ENCODE measurements at regions of chr12 and their contacts with region 1.

Region 1: GRCh38 chr12:15899282-15899870 is 11.8 kb upstream of the DERA start:
- DNase-seq: no peak
- H3K4me3 ChIP-seq: no peak overlapping the region
- H3K27ac ChIP-seq: peak overlapping the region in 1 of 2 experiments; percentile 5; a peak in 1 of 4 replicates
- H3K4me1 ChIP-seq: peaks cover 0 to 9% of the 10 kb centered on the region in 2 experiments; a peak in 2 of 4 replicates
- H3K27me3 ChIP-seq: no peaks in the 10 kb centered on the region
- CTCF ChIP-seq: peak; percentile 89
- EP300 ChIP-seq: no peak
- RAD21 ChIP-seq: peak; percentile 61

Region 2: GRCh38 chr12:15634010-15634683 is 265.2 kb before region 1 on chr12:
- CTCF ChIA-PET with region 1: no interaction called
- POLR2A ChIA-PET with region 1: no interaction called
- DNase-seq: no peak
- H3K4me3 ChIP-seq: no peak overlapping the region
- H3K27ac ChIP-seq: peak overlapping the region in 1 of 2 experiments; percentile 100; a peak in 2 of 4 replicates
- H3K4me1 ChIP-seq: peaks cover 7 to 66% of the 10 kb centered on the region in 2 experiments
- H3K27me3 ChIP-seq: no peaks in the 10 kb centered on the region
- CTCF ChIP-seq: no peak
- EP300 ChIP-seq: no peak
- RAD21 ChIP-seq: no peak

Region 3: DNA sequence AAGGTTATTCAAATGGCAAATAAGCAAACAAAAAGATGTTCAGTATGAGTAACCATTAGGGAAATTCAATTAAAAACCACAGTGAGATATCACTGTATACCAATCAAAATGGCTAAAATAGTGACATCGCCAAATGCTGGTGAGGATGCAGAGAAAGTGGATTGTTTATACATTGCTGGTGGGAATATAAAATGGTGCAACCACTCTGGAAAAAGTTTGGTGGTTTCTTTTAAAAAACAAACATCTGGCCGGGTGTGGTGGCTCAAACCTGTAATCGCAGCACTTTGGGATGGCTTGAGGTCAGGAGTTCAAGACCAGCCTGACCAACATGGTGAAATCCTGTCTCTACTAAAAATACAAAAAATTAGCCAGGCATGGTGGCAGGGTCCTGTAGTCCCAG is 31.2 kb before region 1 on chr12:
- CTCF ChIA-PET with region 1: no interaction called
- POLR2A ChIA-PET with region 1: no interaction called
- DNase-seq: no peak
- H3K4me3 ChIP-seq: no peak overlapping the region
- H3K27ac ChIP-seq: no peak overlapping the region
- H3K4me1 ChIP-seq: no peaks in the 10 kb centered on the region
- H3K27me3 ChIP-seq: no peaks in the 10 kb centered on the region
- CTCF ChIP-seq: no peak
- EP300 ChIP-seq: no peak
- RAD21 ChIP-seq: no peak

Region 4: GRCh38 chr12:15882118-15882971 is 17.0 kb before region 1 on chr12 and contains the start of gene STRAP:
- CTCF ChIA-PET with region 1: interaction called, 31 read pairs
- POLR2A ChIA-PET with region 1: no interaction called
- DNase-seq: peak; percentile 88
- H3K4me3 ChIP-seq: peak within 1 kb of the TSS; percentile 76 to 98
- H3K27ac ChIP-seq: peak within 1 kb of the TSS; percentile 95 to 96
- H3K4me1 ChIP-seq: peaks cover 5 to 16% of the 10 kb centered on the region in 2 experiments
- H3K27me3 ChIP-seq: no peaks in the 10 kb centered on the region
- CTCF ChIP-seq: no peak
- EP300 ChIP-seq: no peak
- RAD21 ChIP-seq: no peak
- polyA plus RNA-seq, gene STRAP: 85.6 and 108 TPM in 2 replicates

Region 5: GRCh38 chr12:15910864-15911721 is 11.7 kb after region 1 on chr12 and contains the start of gene DERA:
- CTCF ChIA-PET with region 1: interaction called, 23 read pairs
- POLR2A ChIA-PET with region 1: interaction called, 5 read pairs
- DNase-seq: peak; percentile 91
- H3K4me3 ChIP-seq: peak within 1 kb of the TSS; percentile 92
- H3K27ac ChIP-seq: peak within 1 kb of the TSS; percentile 81 to 95
- H3K4me1 ChIP-seq: peaks cover 4 to 5% of the 10 kb centered on the region in 2 experiments; a peak in 3 of 4 replicates
- H3K27me3 ChIP-seq: no peaks in the 10 kb centered on the region
- CTCF ChIP-seq: 0 out of 2 replicates have a peak, but pooled peaks have one; percentile 10
- EP300 ChIP-seq: no peak
- RAD21 ChIP-seq: no peak
- polyA plus RNA-seq, gene DERA: 16.6 and 20.0 TPM in 2 replicates

Region 6: DNA sequence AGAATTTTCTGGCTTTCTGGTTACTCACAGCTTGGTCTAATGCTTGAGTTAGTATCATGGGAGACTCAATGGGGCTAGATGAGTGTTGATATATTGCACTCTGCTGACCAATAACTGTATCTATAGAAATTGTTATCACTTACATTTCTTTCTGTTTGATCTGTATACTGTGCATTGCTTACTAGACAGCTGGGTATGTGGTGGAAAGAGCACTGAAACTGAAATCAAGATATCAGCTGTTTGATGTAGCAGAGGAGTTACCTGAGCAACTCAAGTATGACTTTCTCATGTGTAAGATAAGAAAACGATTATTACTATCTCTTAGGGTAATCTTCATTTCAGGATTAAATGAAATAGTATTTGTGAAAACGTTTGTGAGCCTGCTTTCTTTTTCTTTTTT is 195.1 kb after region 1 on chr12:
- CTCF ChIA-PET with region 1: no interaction called
- POLR2A ChIA-PET with region 1: no interaction called
- DNase-seq: no peak
- H3K4me3 ChIP-seq: no peak overlapping the region
- H3K27ac ChIP-seq: no peak overlapping the region
- H3K4me1 ChIP-seq: peaks cover 0 to 7% of the 10 kb centered on the region in 2 experiments; a peak in 1 of 4 replicates
- H3K27me3 ChIP-seq: no peaks in the 10 kb centered on the region
- CTCF ChIP-seq: no peak
- EP300 ChIP-seq: no peak
- RAD21 ChIP-seq: no peak

Region 7: DNA sequence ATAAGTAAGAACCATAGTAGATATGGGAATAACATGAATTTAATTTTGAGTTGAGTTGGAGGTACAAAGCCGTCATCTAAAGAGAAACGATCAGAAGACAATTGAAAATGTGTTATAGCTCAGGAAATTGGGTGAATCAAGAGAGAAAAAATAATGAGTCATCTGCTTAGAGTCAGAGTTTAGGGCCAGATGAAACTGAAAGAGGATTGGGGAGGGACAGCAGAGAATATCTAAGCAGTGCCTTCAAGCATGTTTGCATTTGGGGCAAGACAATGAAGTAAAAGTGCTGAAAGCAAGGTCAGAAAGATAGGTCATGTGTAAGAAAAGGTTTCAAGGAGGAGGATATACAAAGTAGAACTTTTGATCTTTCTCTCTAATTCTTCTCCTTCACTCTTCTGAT is 328.7 kb after region 1 on chr12:
- CTCF ChIA-PET with region 1: no interaction called
- POLR2A ChIA-PET with region 1: no interaction called
- DNase-seq: no peak
- H3K4me3 ChIP-seq: no peak overlapping the region
- H3K27ac ChIP-seq: no peak overlapping the region
- H3K4me1 ChIP-seq: no peaks in the 10 kb centered on the region; a peak in 1 of 4 replicates
- H3K27me3 ChIP-seq: no peaks in the 10 kb centered on the region
- CTCF ChIP-seq: no peak
- EP300 ChIP-seq: no peak
- RAD21 ChIP-seq: no peak